Naive thymus-derived CD4-positive, alpha-beta T cell (primary cell): ENCODE measurements at regions of chr1 and their contacts with region 1.

Region 1: DNA sequence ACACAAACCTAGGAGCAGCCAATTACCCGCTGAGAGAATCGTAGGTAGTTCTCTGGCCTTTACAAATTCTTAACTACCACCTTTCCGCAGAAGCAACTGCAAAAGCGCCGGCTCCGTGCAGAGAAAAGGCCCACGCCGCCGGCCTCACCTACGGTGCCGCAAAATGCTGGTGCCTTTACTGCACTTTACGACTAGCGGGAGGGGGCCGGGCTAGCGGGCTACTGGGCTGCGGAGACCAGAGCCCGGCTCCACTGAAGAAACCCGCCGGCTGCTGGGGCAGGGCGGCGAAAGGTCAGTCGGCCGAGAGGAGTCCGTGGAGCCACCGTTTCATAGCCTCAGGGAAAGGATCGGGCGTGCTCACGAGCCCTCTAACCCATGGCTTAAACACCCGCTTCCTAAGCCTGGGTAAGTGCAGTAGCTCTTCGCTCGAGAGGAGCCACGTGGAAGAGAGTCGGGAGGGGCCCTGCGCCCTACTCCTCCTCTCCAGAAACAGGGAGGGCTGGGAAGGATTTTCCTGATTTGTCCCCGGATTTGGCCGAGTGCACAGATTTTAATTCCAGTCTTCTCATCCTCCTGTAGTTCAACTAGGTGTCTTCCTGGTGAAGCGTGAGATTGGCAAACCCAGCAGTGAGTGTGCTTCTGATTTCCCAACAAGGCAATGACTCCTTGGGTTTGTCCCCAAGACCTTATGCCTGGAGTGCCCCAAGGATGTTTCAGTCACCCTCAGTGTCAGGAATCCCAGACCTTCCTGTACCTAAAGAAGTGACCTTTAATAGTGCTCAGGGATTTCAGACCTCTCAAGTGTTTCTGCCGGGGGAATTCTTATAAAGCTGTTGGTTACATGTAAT is at the start of gene DPH5:
- DNase-seq: peak; percentile 72 to 91 (median 87)
- ATAC-seq: peak; percentile 99
- H3K4me3 ChIP-seq: peak within 1 kb of the TSS; percentile 85
- H3K4me3 Mint-ChIP-seq: peak within 1 kb of the TSS; percentile 89 to 97 (median 94)
- H3K27ac ChIP-seq: peak within 1 kb of the TSS; percentile 88
- H3K27ac Mint-ChIP-seq: peak within 1 kb of the TSS; percentile 92 to 100 (median 98)
- H3K4me1 ChIP-seq: peaks cover 14 to 44% of the 10 kb centered on the region in 2 donors
- H3K4me1 Mint-ChIP-seq: peaks cover 42 to 95% (median 78%) of the 10 kb centered on the region in 7 donors
- H3K27me3 ChIP-seq: no peaks in the 10 kb centered on the region
- H3K27me3 Mint-ChIP-seq: no peaks in the 10 kb centered on the region
- total RNA-seq, gene DPH5: 26.3 to 72.2 (median 45.3) TPM

Region 2: DNA sequence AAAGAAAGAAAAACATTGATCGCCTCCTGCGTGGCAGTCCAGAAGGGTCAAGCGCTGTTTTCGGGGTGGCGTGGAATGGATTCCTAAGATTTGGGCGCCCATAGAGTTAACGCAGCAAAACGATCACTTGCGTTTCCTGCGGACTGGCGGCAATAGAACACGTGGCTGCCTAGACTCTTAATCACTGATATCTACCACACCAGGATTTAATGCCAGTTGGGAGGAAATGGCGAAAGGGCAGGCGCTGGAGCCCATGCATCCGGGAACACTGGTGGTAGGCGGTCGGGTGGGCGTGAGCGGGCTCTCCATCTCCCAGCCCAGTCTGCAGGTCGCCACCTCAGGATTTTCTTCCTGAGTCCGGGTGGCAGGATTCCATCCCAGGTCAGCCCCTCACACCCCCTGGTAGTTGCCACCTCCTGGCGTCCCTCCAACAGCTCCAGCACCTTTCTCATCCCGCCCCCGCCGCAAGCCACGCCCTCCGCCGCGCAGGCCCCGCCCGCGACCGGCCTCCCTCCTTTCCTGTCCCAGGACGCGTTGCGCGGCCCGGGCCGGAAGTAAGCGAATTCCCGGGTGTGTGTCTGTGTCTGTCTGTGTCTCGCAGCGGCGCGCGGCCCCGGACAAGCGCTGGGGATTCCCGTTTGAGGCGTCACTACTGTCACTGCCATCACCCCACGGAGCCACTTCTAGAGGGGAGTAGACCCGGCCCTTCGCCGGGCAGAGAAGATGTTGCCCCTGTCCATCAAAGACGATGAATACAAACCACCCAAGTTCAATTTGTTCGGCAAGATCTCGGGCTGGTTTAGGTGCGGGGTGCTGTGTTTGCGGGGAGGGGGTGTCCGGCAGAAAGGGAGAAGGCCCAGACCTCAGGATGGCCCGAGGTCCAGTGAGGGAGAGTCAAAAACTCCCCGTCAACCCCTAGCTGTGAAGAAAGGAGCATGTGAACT is 130.1 kb before region 1 on chr1 and contains the start of gene SLC30A7:
- CTCF ChIA-PET with region 1: no interaction called
- POLR2A ChIA-PET with region 1: no interaction called
- intact Hi-C with region 1: loop called in 1 of 2 experiments (anchors 1 kb)
- DNase-seq: peak; percentile 93 to 99 (median 94)
- ATAC-seq: peak; percentile 90
- H3K4me3 ChIP-seq: peak within 1 kb of the TSS; percentile 96
- H3K4me3 Mint-ChIP-seq: peak within 1 kb of the TSS; percentile 91 to 100 (median 99)
- H3K27ac ChIP-seq: peak within 1 kb of the TSS; percentile 95
- H3K27ac Mint-ChIP-seq: peak within 1 kb of the TSS; percentile 95 to 100 (median 99)
- H3K4me1 ChIP-seq: peaks cover 7 to 10% of the 10 kb centered on the region in 2 donors
- H3K4me1 Mint-ChIP-seq: peaks cover 17 to 58% (median 50%) of the 10 kb centered on the region in 7 donors
- H3K27me3 ChIP-seq: no peaks in the 10 kb centered on the region
- H3K27me3 Mint-ChIP-seq: no peaks in the 10 kb centered on the region
- total RNA-seq, gene SLC30A7: 29.9 to 44.5 (median 38.8) TPM

Region 3: GRCh38 chr1:101002551-101002950 is 23.3 kb before region 1 on chr1:
- CTCF ChIA-PET with region 1: no interaction called
- POLR2A ChIA-PET with region 1: interaction called, 6 read pairs
- intact Hi-C with region 1: loop called in 1 of 2 experiments (anchors 2 kb)
- DNase-seq: no peak
- ATAC-seq: peak; percentile 57
- H3K4me3 ChIP-seq: no peak overlapping the region
- H3K4me3 Mint-ChIP-seq: peak overlapping the region in 7 of 10 donors; percentile 5 to 60 (median 29)
- H3K27ac ChIP-seq: no peak overlapping the region
- H3K27ac Mint-ChIP-seq: peak overlapping the region in 7 of 9 donors; percentile 41 to 95 (median 85)
- H3K4me1 ChIP-seq: peaks cover 28 to 47% of the 10 kb centered on the region in 2 donors
- H3K4me1 Mint-ChIP-seq: peaks cover 42 to 74% (median 56%) of the 10 kb centered on the region in 7 donors
- H3K27me3 ChIP-seq: no peaks in the 10 kb centered on the region
- H3K27me3 Mint-ChIP-seq: no peaks in the 10 kb centered on the region

Region 4: DNA sequence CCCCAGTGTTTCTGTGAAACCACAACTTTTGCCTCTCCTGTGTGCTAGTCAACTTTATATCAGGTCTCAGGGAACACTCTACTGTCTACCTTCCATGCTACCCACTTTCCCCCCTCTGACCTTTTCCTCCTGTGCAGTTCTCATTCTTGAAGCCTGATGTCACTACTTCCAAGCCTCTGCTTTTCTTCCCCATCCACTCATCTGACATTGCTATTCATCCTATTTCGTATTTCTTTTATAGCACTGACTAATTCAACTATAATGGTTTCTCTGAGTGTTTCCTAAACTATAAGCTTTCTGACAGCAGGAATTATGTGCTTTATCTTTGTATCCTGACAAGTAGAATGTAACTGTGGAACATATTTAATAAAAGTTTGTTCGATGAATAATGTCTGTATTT is 17.9 kb after region 1 on chr1:
- CTCF ChIA-PET with region 1: interaction called, 3 read pairs
- POLR2A ChIA-PET with region 1: interaction called, 7 read pairs
- intact Hi-C with region 1: loop called in 1 of 2 experiments (anchors 2 kb)
- DNase-seq: no peak
- ATAC-seq: no peak
- H3K4me3 ChIP-seq: no peak overlapping the region
- H3K4me3 Mint-ChIP-seq: no peak overlapping the region
- H3K27ac ChIP-seq: no peak overlapping the region
- H3K27ac Mint-ChIP-seq: no peak overlapping the region
- H3K4me1 ChIP-seq: no peaks in the 10 kb centered on the region
- H3K4me1 Mint-ChIP-seq: peaks cover 2 to 15% (median 13%) of the 10 kb centered on the region in 7 donors
- H3K27me3 ChIP-seq: no peaks in the 10 kb centered on the region
- H3K27me3 Mint-ChIP-seq: no peaks in the 10 kb centered on the region

Region 5: GRCh38 chr1:101081496-101082488 is 55.9 kb after region 1 on chr1:
- CTCF ChIA-PET with region 1: no interaction called
- POLR2A ChIA-PET with region 1: interaction called, 3 read pairs
- intact Hi-C with region 1: loop called (anchors 1 to 5 kb)
- DNase-seq: peak in 7 of 9 donors; percentile 24 to 49 (median 40)
- ATAC-seq: peak; percentile 95
- H3K4me3 ChIP-seq: no peak overlapping the region
- H3K4me3 Mint-ChIP-seq: peak overlapping the region; percentile 42 to 79 (median 72)
- H3K27ac ChIP-seq: no peak overlapping the region
- H3K27ac Mint-ChIP-seq: peak overlapping the region; percentile 69 to 95 (median 82)
- H3K4me1 ChIP-seq: peaks cover 29 to 31% of the 10 kb centered on the region in 2 donors
- H3K4me1 Mint-ChIP-seq: peaks cover 29 to 63% (median 57%) of the 10 kb centered on the region in 7 donors
- H3K27me3 ChIP-seq: no peaks in the 10 kb centered on the region
- H3K27me3 Mint-ChIP-seq: no peaks in the 10 kb centered on the region

Region 6: GRCh38 chr1:101128211-101128727 is 102.4 kb after region 1 on chr1:
- CTCF ChIA-PET with region 1: no interaction called
- POLR2A ChIA-PET with region 1: no interaction called
- intact Hi-C with region 1: loop called (anchors 2 to 10 kb)
- DNase-seq: peak in 7 of 9 donors; percentile 38 to 72 (median 60)
- ATAC-seq: peak; percentile 79
- H3K4me3 ChIP-seq: no peak overlapping the region
- H3K4me3 Mint-ChIP-seq: peak overlapping the region; percentile 17 to 80 (median 72)
- H3K27ac ChIP-seq: peak overlapping the region; percentile 64
- H3K27ac Mint-ChIP-seq: peak overlapping the region; percentile 85 to 96 (median 91)
- H3K4me1 ChIP-seq: peaks cover 26 to 49% of the 10 kb centered on the region in 2 donors
- H3K4me1 Mint-ChIP-seq: peaks cover 42 to 83% (median 66%) of the 10 kb centered on the region in 7 donors
- H3K27me3 ChIP-seq: no peaks in the 10 kb centered on the region
- H3K27me3 Mint-ChIP-seq: no peaks in the 10 kb centered on the region

Region 7: GRCh38 chr1:101178688-101179491 is 153.0 kb after region 1 on chr1:
- CTCF ChIA-PET with region 1: no interaction called
- POLR2A ChIA-PET with region 1: no interaction called
- intact Hi-C with region 1: loop called in 1 of 2 experiments (anchors 5 kb)
- DNase-seq: peak in 7 of 9 donors; percentile 40 to 61 (median 46)
- ATAC-seq: peak; percentile 78
- H3K4me3 ChIP-seq: peak overlapping the region; percentile 3
- H3K4me3 Mint-ChIP-seq: peak overlapping the region; percentile 63 to 90 (median 80)
- H3K27ac ChIP-seq: peak overlapping the region; percentile 60
- H3K27ac Mint-ChIP-seq: peak overlapping the region; percentile 86 to 98 (median 92)
- H3K4me1 ChIP-seq: peaks cover 12 to 20% of the 10 kb centered on the region in 2 donors
- H3K4me1 Mint-ChIP-seq: peaks cover 24 to 69% (median 51%) of the 10 kb centered on the region in 7 donors
- H3K27me3 ChIP-seq: no peaks in the 10 kb centered on the region
- H3K27me3 Mint-ChIP-seq: no peaks in the 10 kb centered on the region